Aorta (tissue), 5 donors: ENCODE measurements at regions of chr7 and their contacts with region 1.

Region 1: DNA sequence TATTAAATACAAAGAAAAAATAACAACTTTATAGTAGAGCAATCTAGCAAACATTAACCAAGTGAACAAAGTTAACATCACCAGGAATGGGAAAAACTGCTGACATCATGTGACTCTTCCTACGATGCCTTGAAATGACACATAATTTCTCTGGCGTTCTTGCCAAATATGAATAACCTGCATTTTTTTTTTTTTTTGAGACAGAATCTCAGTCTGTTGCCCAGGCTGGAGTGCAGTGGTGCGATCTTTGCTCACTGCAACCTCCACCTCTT is 126.5 kb upstream of the VKORC1L1 start:
- DNase-seq: no peak
- ATAC-seq: no peak
- H3K4me3 ChIP-seq: no peak overlapping the region
- H3K27ac ChIP-seq: peak overlapping the region in 1 of 2 donors; percentile 64
- H3K4me1 ChIP-seq: no peaks in the 10 kb centered on the region
- H3K27me3 ChIP-seq: no peaks in the 10 kb centered on the region

Region 2: GRCh38 chr7:65974191-65974801 is 228.0 kb after region 1 on chr7:
- intact Hi-C with region 1: loop called in 1 of 2 experiments (anchors 10 kb)
- DNase-seq: peak in 1 of 2 donors; percentile 75
- ATAC-seq: no peak
- H3K4me3 ChIP-seq: no peak overlapping the region
- H3K27ac ChIP-seq: no peak overlapping the region
- H3K4me1 ChIP-seq: no peaks in the 10 kb centered on the region
- H3K27me3 ChIP-seq: no peaks in the 10 kb centered on the region

Region 3: DNA sequence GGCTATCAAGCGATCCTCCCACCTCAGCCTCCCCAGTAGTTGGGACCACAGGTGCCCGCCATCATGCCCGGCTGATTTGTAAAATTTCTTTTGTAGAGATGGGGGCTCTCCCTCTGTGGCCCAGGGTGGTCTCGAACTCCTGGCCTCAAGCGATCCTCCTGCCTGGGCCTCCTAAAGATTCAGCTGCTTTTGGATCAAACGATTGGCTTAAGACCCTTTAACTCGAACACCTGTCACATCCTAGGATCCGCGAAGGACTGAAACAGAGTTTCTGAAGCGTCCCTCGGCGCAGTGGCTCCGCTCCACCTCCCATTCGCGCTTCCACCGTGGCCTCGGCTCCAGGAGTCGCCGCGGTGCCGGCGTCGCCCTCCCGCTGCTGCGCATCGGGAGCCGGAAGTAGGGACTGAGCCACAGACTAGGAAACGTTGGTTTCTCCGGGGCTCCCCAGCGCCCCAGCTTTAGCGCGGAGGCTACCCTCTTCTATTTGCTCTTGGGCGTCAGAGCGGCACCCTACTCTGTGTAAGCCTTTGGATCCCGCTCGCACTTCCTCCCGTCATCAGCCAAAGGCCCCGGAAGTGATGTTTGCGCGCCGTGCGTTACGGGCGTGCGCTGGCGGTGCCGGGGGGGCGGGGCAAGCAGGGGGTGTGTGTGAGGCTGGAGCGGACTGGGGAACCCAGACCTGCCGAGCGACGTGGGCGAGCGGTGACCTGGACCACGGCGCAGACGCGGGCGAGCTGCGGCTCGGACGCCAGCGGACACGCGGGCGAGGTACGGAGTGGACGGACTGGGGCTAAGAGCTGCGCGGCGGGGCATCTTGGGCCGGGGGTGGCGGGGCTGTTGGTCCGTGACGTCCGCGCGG is 935.4 kb after region 1 on chr7:
- intact Hi-C with region 1: no loop called
- DNase-seq: peak; percentile 98 to 100
- ATAC-seq: peak; percentile 99
- H3K4me3 ChIP-seq: peak overlapping the region; percentile 70 to 98
- H3K27ac ChIP-seq: peak overlapping the region; percentile 6 to 93
- H3K4me1 ChIP-seq: no peaks in the 10 kb centered on the region
- H3K27me3 ChIP-seq: no peaks in the 10 kb centered on the region